SK-N-SH (cell line): ENCODE measurements at regions of chrX and their contacts with region 1.

Region 1: GRCh38 chrX:14528629-14529289 is 577 bp upstream of the GLRA2 start:
- DNase-seq: peak; percentile 27
- H3K4me3 ChIP-seq: no peak overlapping the region; a peak in 2 of 4 replicates
- H3K27ac ChIP-seq: no peak overlapping the region
- H3K4me1 ChIP-seq: no peaks in the 10 kb centered on the region
- H3K27me3 ChIP-seq: no peaks in the 10 kb centered on the region
- CTCF ChIP-seq: peak; percentile 69
- EP300 ChIP-seq: no peak
- RAD21 ChIP-seq: peak; percentile 71

Region 2: DNA sequence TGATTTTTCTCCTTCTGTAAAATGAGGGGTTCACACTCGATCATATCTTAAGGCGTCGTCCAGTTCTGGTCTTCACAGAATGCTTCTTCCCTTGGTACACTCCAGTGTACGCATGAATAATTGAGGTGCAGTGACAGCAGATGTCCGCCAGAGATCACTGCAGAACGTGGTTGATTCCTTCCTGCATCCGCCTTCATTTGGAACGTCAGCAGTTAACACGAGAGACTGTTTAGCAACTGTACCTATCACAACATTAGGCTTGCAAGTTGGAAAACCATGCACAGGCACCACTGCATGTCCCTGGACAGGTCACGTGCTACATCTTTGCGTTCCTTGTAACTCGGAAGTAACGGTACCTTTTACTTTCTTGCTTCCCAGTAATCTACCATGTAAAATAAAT is 433.1 kb before region 1 on chrX:
- CTCF ChIA-PET with region 1: interaction called, 15 read pairs
- POLR2A ChIA-PET with region 1: no interaction called
- DNase-seq: peak; percentile 52
- H3K4me3 ChIP-seq: peak overlapping the region in 1 of 2 experiments; percentile 4; a peak in 1 of 4 replicates
- H3K27ac ChIP-seq: no peak overlapping the region
- H3K4me1 ChIP-seq: no peaks in the 10 kb centered on the region; a peak in 1 of 4 replicates
- H3K27me3 ChIP-seq: peaks cover 8% of the 10 kb centered on the region; the same call in 1 of the 2 replicates
- CTCF ChIP-seq: peak; percentile 80
- EP300 ChIP-seq: no peak
- RAD21 ChIP-seq: peak; percentile 90